ENCODE measurements at regions of chr4 and their contacts with region 1.

Region 1: GRCh38 chr4:145180298-145181090 is at the start of gene OTUD4:
- DNase-seq: peak; percentile 91
- ATAC-seq: peak; percentile 81
- H3K4me3 Mint-ChIP-seq: peak within 1 kb of the TSS; percentile 89
- H3K27ac Mint-ChIP-seq: peak within 1 kb of the TSS; percentile 93
- H3K4me1 Mint-ChIP-seq: peaks cover 30% of the 10 kb centered on the region
- H3K27me3 Mint-ChIP-seq: no peaks in the 10 kb centered on the region
- CTCF ChIP-seq: no peak
- total RNA-seq, gene OTUD4: 45.2 and 47.3 TPM in 2 replicates

Region 2: GRCh38 chr4:143513306-143514168 is 1667.0 kb before region 1 on chr4 and contains the start of gene SMARCA5:
- CTCF ChIA-PET with region 1: no interaction called
- POLR2A ChIA-PET with region 1: no interaction called
- intact Hi-C with region 1: loop called (anchors 1 kb)
- DNase-seq: peak; percentile 89
- ATAC-seq: peak; percentile 88
- H3K4me3 Mint-ChIP-seq: peak within 1 kb of the TSS; percentile 99
- H3K27ac Mint-ChIP-seq: peak within 1 kb of the TSS; percentile 100
- H3K4me1 Mint-ChIP-seq: peaks cover 47% of the 10 kb centered on the region
- H3K27me3 Mint-ChIP-seq: no peaks in the 10 kb centered on the region
- CTCF ChIP-seq: no peak
- total RNA-seq, gene SMARCA5: 47.3 and 49.8 TPM in 2 replicates

Region 3: GRCh38 chr4:145154573-145154972 is 25.9 kb before region 1 on chr4:
- CTCF ChIA-PET with region 1: no interaction called
- POLR2A ChIA-PET with region 1: no interaction called
- intact Hi-C with region 1: loop called (anchors 2 kb)
- DNase-seq: no peak
- ATAC-seq: peak; percentile 37
- H3K4me3 Mint-ChIP-seq: no peak overlapping the region
- H3K27ac Mint-ChIP-seq: no peak overlapping the region
- H3K4me1 Mint-ChIP-seq: peaks cover 8% of the 10 kb centered on the region
- H3K27me3 Mint-ChIP-seq: no peaks in the 10 kb centered on the region
- CTCF ChIP-seq: no peak

Region 4: GRCh38 chr4:145195167-145195566 is 14.7 kb after region 1 on chr4:
- CTCF ChIA-PET with region 1: no interaction called
- POLR2A ChIA-PET with region 1: interaction called, 5 read pairs
- intact Hi-C with region 1: loop called (anchors 1 kb)
- DNase-seq: no peak
- ATAC-seq: peak; percentile 83
- H3K4me3 Mint-ChIP-seq: no peak overlapping the region
- H3K27ac Mint-ChIP-seq: no peak overlapping the region
- H3K4me1 Mint-ChIP-seq: peaks cover 13% of the 10 kb centered on the region
- H3K27me3 Mint-ChIP-seq: no peaks in the 10 kb centered on the region
- CTCF ChIP-seq: no peak

Region 5: GRCh38 chr4:145266881-145267280 is 86.4 kb after region 1 on chr4:
- CTCF ChIA-PET with region 1: no interaction called
- POLR2A ChIA-PET with region 1: no interaction called
- intact Hi-C with region 1: no loop called
- DNase-seq: no peak
- ATAC-seq: no peak
- H3K4me3 Mint-ChIP-seq: no peak overlapping the region
- H3K27ac Mint-ChIP-seq: no peak overlapping the region
- H3K4me1 Mint-ChIP-seq: no peaks in the 10 kb centered on the region
- H3K27me3 Mint-ChIP-seq: peaks cover 3% of the 10 kb centered on the region
- CTCF ChIP-seq: no peak

Region 6: GRCh38 chr4:145732895-145733880 is 552.7 kb after region 1 on chr4:
- CTCF ChIA-PET with region 1: no interaction called
- POLR2A ChIA-PET with region 1: no interaction called
- intact Hi-C with region 1: loop called (anchors 5 kb)
- DNase-seq: peak; percentile 72
- ATAC-seq: peak; percentile 97
- H3K4me3 Mint-ChIP-seq: peak overlapping the region; percentile 85
- H3K27ac Mint-ChIP-seq: no peak overlapping the region
- H3K4me1 Mint-ChIP-seq: peaks cover 11% of the 10 kb centered on the region
- H3K27me3 Mint-ChIP-seq: peaks cover 10% of the 10 kb centered on the region
- CTCF ChIP-seq: no peak

Region 7: GRCh38 chr4:146175541-146176453 is 995.3 kb after region 1 on chr4 and contains the start of gene LSM6:
- CTCF ChIA-PET with region 1: no interaction called
- POLR2A ChIA-PET with region 1: no interaction called
- intact Hi-C with region 1: loop called (anchors 5 kb)
- DNase-seq: peak; percentile 75
- ATAC-seq: peak; percentile 93
- H3K4me3 Mint-ChIP-seq: peak within 1 kb of the TSS; percentile 87
- H3K27ac Mint-ChIP-seq: peak within 1 kb of the TSS; percentile 90
- H3K4me1 Mint-ChIP-seq: peaks cover 44% of the 10 kb centered on the region
- H3K27me3 Mint-ChIP-seq: no peaks in the 10 kb centered on the region
- CTCF ChIP-seq: no peak
- total RNA-seq, gene LSM6: 57.4 and 59.7 TPM in 2 replicates

Measured in activated B cell treated with CpG ODN at 0.5 μM for 24 hours (primary cell).